ENCODE measurements at regions of chr2 and their contacts with region 1.

Region 1: GRCh38 chr2:200376513-200377354 is 70.2 kb downstream of the SPATS2L start:
- DNase-seq: peak; percentile 77
- ATAC-seq: peak; percentile 40
- H3K4me3 ChIP-seq: peak overlapping the region in 1 of 2 experiments; percentile 65; a peak in 2 of 4 replicates
- H3K27ac ChIP-seq: peak overlapping the region; percentile 100
- H3K4me1 ChIP-seq: peaks cover 91% of the 10 kb centered on the region
- H3K27me3 ChIP-seq: no peaks in the 10 kb centered on the region
- CTCF ChIP-seq: no peak

Region 2: DNA sequence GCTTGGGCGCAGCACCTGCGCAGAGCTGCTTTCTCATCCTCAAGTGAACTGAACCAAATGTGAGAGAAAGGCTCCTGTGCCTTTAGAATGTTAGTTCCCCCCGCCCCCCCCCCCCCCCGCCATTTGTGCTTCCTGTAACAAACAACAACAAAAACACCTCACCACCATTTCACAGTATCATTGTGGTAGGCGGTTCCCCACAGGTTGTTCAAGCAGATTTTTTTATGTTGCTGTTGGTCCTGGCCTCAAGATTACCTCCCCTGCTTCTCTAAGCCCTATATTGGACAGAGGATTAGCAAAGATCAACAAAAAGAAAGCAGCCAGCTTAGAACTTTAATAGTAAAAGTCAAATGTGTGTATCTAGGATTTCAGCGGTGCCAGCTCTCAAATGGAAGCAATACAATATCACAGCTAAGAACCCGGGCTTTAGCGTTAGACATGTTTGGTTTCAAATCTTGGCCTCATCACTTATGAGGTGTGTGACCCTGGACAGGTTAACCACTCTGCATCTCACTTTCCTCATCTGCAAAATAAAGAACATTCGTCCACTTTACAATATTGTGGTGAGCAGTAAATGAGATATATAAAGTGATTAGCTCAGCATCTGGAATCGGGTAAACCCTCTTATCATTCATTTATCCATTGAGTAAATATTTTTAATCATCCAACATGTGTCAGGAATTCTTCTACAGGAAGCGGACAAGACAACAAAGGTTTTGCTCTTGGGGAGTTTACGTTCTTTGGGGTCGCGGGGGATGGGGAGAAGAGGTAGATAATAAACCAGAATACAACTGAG is 48.5 kb after region 1 on chr2:
- CTCF ChIA-PET with region 1: no interaction called
- POLR2A ChIA-PET with region 1: interaction called, 14 read pairs
- in situ Hi-C with region 1: no loop called
- intact Hi-C with region 1: no loop called
- DNase-seq: no peak
- ATAC-seq: no peak
- H3K4me3 ChIP-seq: no peak overlapping the region
- H3K27ac ChIP-seq: peak overlapping the region; percentile 74
- H3K4me1 ChIP-seq: peaks cover 28% of the 10 kb centered on the region
- H3K27me3 ChIP-seq: no peaks in the 10 kb centered on the region
- CTCF ChIP-seq: no peak

Region 3: DNA sequence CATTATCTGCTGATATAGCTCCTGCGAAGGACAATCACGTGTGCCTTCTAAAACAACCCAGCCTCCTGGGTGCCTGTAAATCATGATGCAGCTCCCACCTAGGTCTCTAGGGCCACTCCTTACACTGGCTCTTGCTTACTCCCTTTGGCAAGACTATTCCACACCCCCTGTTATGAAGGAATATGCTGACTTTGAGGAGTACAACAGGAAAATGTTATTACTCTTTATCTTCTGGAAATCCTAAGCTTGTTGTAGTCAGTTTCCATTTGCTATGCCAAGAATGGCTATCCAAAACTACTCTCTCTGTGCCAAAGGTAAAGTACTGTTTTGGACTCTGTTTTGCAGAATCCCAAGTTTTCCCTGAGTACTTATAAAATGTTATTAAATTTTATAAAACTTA is 157.0 kb after region 1 on chr2:
- CTCF ChIA-PET with region 1: no interaction called
- POLR2A ChIA-PET with region 1: no interaction called
- in situ Hi-C with region 1: no loop called
- intact Hi-C with region 1: no loop called
- DNase-seq: no peak
- ATAC-seq: no peak
- H3K4me3 ChIP-seq: no peak overlapping the region
- H3K27ac ChIP-seq: no peak overlapping the region
- H3K4me1 ChIP-seq: peaks cover 3% of the 10 kb centered on the region; the same call in 1 of the 2 replicates
- H3K27me3 ChIP-seq: no peaks in the 10 kb centered on the region
- CTCF ChIP-seq: no peak

Region 4: GRCh38 chr2:200839513-200839912 is 462.8 kb after region 1 on chr2:
- CTCF ChIA-PET with region 1: no interaction called
- POLR2A ChIA-PET with region 1: no interaction called
- in situ Hi-C with region 1: no loop called
- intact Hi-C with region 1: no loop called
- DNase-seq: no peak
- ATAC-seq: peak; percentile 21; the same call in 1 of the 2 replicates
- H3K4me3 ChIP-seq: no peak overlapping the region
- H3K27ac ChIP-seq: no peak overlapping the region
- H3K4me1 ChIP-seq: no peaks in the 10 kb centered on the region
- H3K27me3 ChIP-seq: no peaks in the 10 kb centered on the region
- CTCF ChIP-seq: no peak